ENCODE measurements at regions of chrX and their contacts with region 1.

Region 1: GRCh38 chrX:9440116-9440844 is 24.6 kb upstream of the TBL1X start:
- DNase-seq: no peak
- ATAC-seq: no peak
- H3K4me3 ChIP-seq: no peak overlapping the region
- H3K4me3 Mint-ChIP-seq: no peak overlapping the region
- H3K27ac ChIP-seq: no peak overlapping the region
- H3K27ac Mint-ChIP-seq: peak overlapping the region; percentile 30 to 55
- H3K4me1 ChIP-seq: no peaks in the 10 kb centered on the region
- H3K4me1 Mint-ChIP-seq: peaks cover 6 to 9% (median 9%) of the 10 kb centered on the region in 3 donors
- H3K27me3 ChIP-seq: no peaks in the 10 kb centered on the region
- H3K27me3 Mint-ChIP-seq: no peaks in the 10 kb centered on the region

Region 2: GRCh38 chrX:8743126-8743732 is 697.1 kb before region 1 on chrX:
- CTCF ChIA-PET with region 1: interaction called in 1 of 2 experiments, 10 read pairs
- POLR2A ChIA-PET with region 1: no interaction called
- DNase-seq: peak; percentile 6 to 68 (median 43)
- ATAC-seq: peak in 1 of 4 experiments; percentile 37
- H3K4me3 ChIP-seq: no peak overlapping the region
- H3K4me3 Mint-ChIP-seq: no peak overlapping the region
- H3K27ac ChIP-seq: no peak overlapping the region
- H3K27ac Mint-ChIP-seq: peak overlapping the region in 1 of 2 donors; percentile 65
- H3K4me1 ChIP-seq: no peaks in the 10 kb centered on the region
- H3K4me1 Mint-ChIP-seq: no peaks in the 10 kb centered on the region
- H3K27me3 ChIP-seq: no peaks in the 10 kb centered on the region
- H3K27me3 Mint-ChIP-seq: peaks cover 3 to 9% of the 10 kb centered on the region in 2 donors